IMR-90 (cell line): ENCODE measurements at regions of chr10 and their contacts with region 1.

Region 1: GRCh38 chr10:33273295-33274002 is 61.0 kb downstream of the NRP1 start:
- DNase-seq: peak; percentile 96
- ATAC-seq: peak; percentile 79
- H3K4me3 ChIP-seq: peak overlapping the region; percentile 29
- H3K27ac ChIP-seq: peak overlapping the region; percentile 90
- H3K4me1 ChIP-seq: peaks cover 22% of the 10 kb centered on the region
- H3K27me3 ChIP-seq: no peaks in the 10 kb centered on the region
- CTCF ChIP-seq: peak; percentile 39
- POLR2A ChIP-seq: peak; percentile 80
- RAD21 ChIP-seq: peak; percentile 38; the same call in 1 of the 2 replicates

Region 2: DNA sequence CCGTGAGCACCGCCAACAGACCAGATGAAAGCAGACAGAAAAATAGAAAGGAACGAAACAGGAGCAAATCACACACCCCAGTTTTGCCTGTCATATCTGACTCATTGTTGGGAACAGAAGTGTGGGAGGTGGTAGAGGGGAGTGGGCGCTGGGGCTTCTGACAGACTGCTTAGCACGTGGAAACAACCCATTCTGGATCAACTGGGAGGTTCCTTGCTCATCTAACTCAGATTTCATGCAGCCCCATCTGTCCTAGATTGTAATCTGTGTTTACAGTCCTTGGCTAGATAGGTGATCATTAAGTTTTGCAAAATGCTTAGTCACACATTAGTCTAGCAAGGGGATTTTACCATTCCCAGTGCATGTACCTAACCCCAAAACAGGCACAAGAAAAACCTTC is 93.1 kb before region 1 on chr10:
- CTCF ChIA-PET with region 1: no interaction called
- POLR2A ChIA-PET with region 1: no interaction called
- dilution Hi-C with region 1: no loop called
- in situ Hi-C with region 1: no loop called
- intact Hi-C with region 1: no loop called
- DNase-seq: peak; percentile 68
- ATAC-seq: no peak; the same call in none of the 2 replicates
- H3K4me3 ChIP-seq: no peak overlapping the region
- H3K27ac ChIP-seq: no peak overlapping the region
- H3K4me1 ChIP-seq: peaks cover 10% of the 10 kb centered on the region
- H3K27me3 ChIP-seq: no peaks in the 10 kb centered on the region
- CTCF ChIP-seq: no peak
- POLR2A ChIP-seq: no peak
- RAD21 ChIP-seq: no peak

Region 3: GRCh38 chr10:33291053-33291592 is 17.7 kb after region 1 on chr10:
- CTCF ChIA-PET with region 1: interaction called, 3 read pairs
- POLR2A ChIA-PET with region 1: interaction called, 4 read pairs
- dilution Hi-C with region 1: no loop called
- in situ Hi-C with region 1: no loop called
- intact Hi-C with region 1: loop called (anchors 2 kb)
- DNase-seq: peak; percentile 87
- ATAC-seq: peak; percentile 93
- H3K4me3 ChIP-seq: no peak overlapping the region
- H3K27ac ChIP-seq: peak overlapping the region; percentile 49
- H3K4me1 ChIP-seq: peaks cover 14% of the 10 kb centered on the region
- H3K27me3 ChIP-seq: no peaks in the 10 kb centered on the region
- CTCF ChIP-seq: no peak
- POLR2A ChIP-seq: no peak
- RAD21 ChIP-seq: no peak